ENCODE measurements at regions of chr7 and their contacts with region 1.

Region 1: DNA sequence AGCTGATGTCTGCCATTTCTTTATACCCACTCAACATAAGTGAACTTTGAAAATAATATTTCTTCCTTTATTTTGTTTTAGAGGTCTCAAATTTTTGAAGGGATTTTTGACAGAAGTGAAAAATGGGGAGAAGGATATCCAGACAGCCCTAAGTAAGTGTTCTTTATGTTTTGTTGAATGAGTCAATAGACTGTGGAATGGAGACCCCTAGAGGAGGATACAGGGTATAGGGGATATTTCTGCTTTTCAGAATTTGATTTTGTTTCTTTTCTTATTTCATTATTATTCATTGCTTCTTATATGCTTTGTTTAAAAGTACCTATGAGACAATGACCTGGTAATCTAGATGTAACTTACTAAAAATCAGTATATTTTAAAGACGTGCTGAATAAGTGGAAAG is 34.4 kb downstream of the PLEKHA8 start:
- ATAC-seq: peak in 4 of 8 experiments; percentile 32 to 82 (median 70)
- H3K4me3 ChIP-seq: no peak overlapping the region
- H3K27ac ChIP-seq: no peak overlapping the region
- H3K4me1 ChIP-seq: no peaks in the 10 kb centered on the region

Region 2: DNA sequence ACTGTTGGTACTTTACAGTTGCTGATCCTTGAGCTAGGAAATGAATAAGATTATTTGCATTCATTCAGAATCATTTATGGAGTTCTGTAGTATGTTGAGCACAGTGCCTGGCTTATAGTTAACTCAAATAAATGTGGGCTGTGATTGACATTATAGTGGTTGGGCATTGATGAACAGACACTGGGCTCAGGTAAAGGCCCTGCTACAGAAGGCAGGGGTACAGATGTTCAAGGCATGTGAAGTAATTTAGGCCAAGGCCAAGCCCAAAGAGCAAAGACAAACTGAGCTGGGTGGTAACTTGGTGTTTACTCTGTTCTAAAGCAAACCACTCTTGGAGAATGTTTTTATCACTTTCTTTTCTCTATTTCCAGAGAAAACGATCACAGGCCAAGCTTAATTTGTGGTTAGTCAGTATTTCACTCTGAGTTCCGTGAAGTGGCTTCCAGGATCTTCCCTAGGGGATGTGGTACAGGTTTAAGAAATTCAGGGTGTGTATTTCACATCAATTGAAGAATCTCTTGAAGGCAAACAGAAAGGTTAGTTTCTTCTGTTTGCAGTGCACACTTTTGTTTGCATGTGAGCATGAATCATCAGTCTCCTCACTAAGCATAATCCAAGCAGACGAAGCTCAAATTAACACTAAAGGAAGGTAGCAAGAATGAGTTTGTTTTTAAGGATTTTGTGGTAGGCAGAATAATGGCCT is 612.9 kb before region 1 on chr7:
- in situ Hi-C with region 1: no loop called
- ATAC-seq: peak in 4 of 8 experiments; percentile 37 to 85 (median 62)
- H3K4me3 ChIP-seq: no peak overlapping the region
- H3K27ac ChIP-seq: no peak overlapping the region
- H3K4me1 ChIP-seq: no peaks in the 10 kb centered on the region

Region 3: GRCh38 chr7:29764227-29764626 is 298.4 kb before region 1 on chr7:
- in situ Hi-C with region 1: loop called in 1 of 9 experiments (anchors 25 kb)
- ATAC-seq: no peak
- H3K4me3 ChIP-seq: no peak overlapping the region
- H3K27ac ChIP-seq: no peak overlapping the region
- H3K4me1 ChIP-seq: no peaks in the 10 kb centered on the region